Right lobe of liver (tissue), 6 donors: ENCODE measurements at regions of chr11 and their contacts with region 1.

Region 1: GRCh38 chr11:62069986-62070919 is 53.6 kb upstream of the INCENP start:
- DNase-seq: no peak
- ATAC-seq: no peak
- H3K4me3 ChIP-seq: no peak overlapping the region
- H3K27ac ChIP-seq: no peak overlapping the region
- H3K4me1 ChIP-seq: no peaks in the 10 kb centered on the region
- H3K27me3 ChIP-seq: no peaks in the 10 kb centered on the region
- CTCF ChIP-seq: no peak
- POLR2A ChIP-seq: no peak

Region 2: DNA sequence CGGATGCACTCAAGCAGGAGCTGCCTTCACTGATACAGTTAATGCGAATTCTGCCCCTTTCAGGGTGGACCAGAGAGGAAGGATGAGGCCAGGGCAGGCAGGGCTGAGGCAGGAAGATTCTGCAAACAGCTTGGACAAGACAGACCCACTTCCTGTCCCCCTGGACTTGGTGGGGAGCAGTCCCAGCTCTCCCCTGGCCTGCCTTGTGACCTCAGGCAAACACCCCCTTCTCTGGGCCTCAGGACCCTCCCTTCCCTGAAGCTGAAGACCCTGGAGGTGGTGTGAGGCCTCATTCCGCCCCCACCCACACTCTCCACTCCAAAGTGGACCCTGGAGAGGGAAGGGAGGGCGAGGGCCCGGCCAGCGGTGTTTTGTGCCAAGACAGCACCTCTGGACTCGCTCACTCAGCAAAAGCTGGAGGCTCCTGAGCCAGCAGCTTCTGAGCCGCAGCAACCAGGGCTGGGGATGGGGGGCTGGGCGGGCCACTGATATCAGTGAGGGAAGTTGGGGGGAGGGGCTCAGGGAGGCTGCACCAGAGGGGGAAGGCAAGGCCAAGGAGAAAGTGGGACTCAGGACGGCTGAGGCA is 161.4 kb before region 1 on chr11:
- intact Hi-C with region 1: loop called in 1 of 2 experiments (anchors 10 kb)
- DNase-seq: peak; percentile 75 to 85 (median 83)
- ATAC-seq: peak; percentile 32 to 68 (median 38)
- H3K4me3 ChIP-seq: no peak overlapping the region
- H3K27ac ChIP-seq: no peak overlapping the region
- H3K4me1 ChIP-seq: peaks cover 0 to 5% (median 0%) of the 10 kb centered on the region in 4 donors
- H3K27me3 ChIP-seq: no peaks in the 10 kb centered on the region
- CTCF ChIP-seq: no peak
- POLR2A ChIP-seq: no peak

Region 3: DNA sequence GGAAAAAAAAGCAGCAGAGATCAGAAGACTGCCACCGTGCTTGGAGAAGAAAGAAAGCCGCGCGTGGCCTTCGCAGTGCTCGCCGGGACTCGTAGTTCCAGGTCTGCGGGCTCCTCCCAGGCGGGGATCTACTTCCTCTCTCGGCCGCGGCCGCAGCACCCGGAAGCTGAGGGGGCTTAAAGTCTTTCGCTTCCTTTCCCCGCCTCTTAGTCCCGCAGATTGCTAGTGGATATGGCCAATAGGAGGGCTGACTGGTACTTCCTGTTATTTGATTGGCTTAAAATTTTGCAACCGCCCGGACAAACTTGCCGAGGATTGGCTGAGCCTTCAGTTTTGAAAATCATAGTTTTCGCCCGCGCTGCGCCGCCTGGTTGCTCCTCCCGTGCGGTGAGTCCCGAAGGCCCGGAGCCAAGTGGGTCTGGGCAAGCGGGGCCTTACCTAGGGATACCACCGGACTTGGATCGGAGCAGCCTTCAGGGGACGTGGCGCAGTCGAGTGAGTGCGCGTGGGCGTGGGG is 53.5 kb after region 1 on chr11 and contains the start of gene INCENP:
- intact Hi-C with region 1: no loop called
- DNase-seq: peak; percentile 97 to 98 (median 97)
- ATAC-seq: peak; percentile 98 to 100 (median 99)
- H3K4me3 ChIP-seq: peak within 1 kb of the TSS; percentile 89 to 93 (median 92)
- H3K27ac ChIP-seq: peak within 1 kb of the TSS; percentile 36 to 55 (median 40)
- H3K4me1 ChIP-seq: peaks cover 0 to 5% (median 0%) of the 10 kb centered on the region in 4 donors
- H3K27me3 ChIP-seq: no peaks in the 10 kb centered on the region
- CTCF ChIP-seq: peak in 1 of 4 donors; percentile 6
- POLR2A ChIP-seq: peak; percentile 27
- total RNA-seq, gene INCENP: 6.4 to 8.9 (median 7.1) TPM